Activated CD4-positive, alpha-beta T cell treated with anti-CD3 and anti-CD28 coated beads for 36 hours (primary cell): ENCODE measurements at regions of chr2 and their contacts with region 1.

Region 1: DNA sequence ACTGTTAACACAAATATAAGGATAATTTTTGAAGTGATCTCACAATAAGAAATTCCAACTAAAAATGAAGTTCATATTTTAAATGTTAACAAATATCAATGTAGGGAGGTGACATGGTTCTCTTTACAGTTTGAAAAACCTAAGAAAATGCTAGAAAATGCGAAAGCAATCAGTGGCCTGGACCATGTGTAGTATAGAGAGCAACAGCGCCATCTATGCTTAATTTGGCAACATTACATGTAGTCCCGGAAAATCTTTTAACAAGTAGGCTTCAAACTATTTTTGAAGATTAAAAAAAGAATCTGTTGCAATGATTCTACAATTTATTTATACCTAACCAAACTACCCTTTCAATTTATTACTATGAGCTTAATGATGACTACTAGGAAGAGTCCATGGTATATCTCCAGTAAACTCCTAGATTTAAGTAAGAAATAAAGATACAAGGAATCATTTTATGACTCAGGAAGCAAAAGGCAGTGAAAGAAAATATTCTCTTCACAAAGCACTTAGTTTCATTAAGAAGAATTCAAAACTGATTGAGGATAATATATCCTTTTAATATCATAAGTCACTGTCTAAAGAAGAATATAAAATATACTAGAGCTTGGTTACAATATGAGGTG is 33.3 kb downstream of the NDUFA10 start:
- DNase-seq: no peak
- ATAC-seq: peak; percentile 71
- H3K4me3 Mint-ChIP-seq: no peak overlapping the region
- H3K27ac Mint-ChIP-seq: no peak overlapping the region
- H3K4me1 Mint-ChIP-seq: no peaks in the 10 kb centered on the region
- H3K27me3 Mint-ChIP-seq: no peaks in the 10 kb centered on the region

Region 2: DNA sequence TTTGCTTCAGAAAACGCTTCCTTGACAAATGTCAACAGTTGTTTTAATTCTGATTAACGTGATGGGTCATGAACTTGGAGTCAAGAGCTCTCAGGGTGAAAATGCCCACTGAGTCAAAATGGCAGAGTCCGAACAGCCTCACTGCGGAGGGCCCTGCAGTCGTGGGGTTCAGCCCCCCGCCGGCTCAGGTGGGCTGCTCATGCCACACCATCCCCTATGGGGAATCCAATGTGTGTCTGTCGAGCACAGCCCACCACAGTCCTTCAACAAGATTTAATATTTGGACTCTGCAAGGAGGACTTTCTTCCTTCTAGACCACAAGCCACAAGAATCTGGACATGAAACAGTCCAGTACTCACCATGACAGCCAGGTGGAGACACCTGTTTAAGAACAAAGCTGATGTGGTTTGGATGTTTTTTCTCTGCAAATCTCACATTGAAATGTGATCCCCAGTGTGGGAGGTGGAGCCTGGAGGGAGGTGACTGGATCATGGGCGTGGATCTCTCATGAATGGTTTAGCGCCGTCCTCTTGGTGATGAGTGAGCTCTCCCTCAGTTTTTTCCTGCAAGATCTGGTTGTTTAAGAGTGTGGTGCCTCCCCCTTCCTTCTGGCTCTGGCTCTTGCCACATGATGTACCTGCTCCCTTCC is 167.6 kb before region 1 on chr2:
- CTCF ChIA-PET with region 1: no interaction called
- POLR2A ChIA-PET with region 1: no interaction called
- intact Hi-C with region 1: loop called in 1 of 2 experiments (anchors 5 kb)
- DNase-seq: no peak
- ATAC-seq: peak; percentile 28
- H3K4me3 Mint-ChIP-seq: no peak overlapping the region
- H3K27ac Mint-ChIP-seq: no peak overlapping the region
- H3K4me1 Mint-ChIP-seq: peaks cover 5% of the 10 kb centered on the region
- H3K27me3 Mint-ChIP-seq: no peaks in the 10 kb centered on the region

Region 3: DNA sequence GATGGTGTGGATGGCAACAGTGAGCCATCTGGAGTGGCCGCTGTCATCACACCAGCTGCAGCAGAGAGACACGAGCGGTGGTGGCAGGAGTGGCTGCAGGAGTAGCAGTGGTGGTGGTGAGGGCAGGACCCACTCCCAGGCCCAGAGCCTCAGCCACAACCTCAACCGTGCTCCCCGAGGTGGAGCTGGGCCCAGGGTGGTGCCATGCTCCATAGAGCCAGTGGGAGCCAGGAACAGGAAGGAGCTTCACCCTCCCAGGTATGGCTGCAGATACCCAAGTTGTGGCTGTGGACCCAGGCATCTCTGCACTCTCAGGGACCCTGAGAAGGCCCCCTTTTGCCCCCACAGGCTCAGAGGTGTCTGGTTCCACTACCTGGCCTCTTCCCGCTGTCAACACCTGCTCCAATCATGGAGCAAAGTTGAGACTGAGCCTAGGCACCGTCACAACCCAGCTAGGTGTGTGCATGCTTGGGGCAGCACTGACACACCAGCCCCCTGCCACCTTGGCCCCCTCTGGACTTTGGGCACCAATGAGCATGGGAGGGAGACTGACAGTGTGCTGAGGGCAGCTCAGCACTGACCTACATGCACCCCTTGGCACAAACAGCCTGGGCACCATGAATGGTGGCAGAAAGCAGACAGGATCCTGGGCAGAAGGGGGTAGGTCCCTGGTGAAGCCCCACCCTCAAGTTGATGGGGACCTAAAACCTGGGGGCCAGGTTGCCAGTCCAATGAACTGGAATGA is 155.6 kb before region 1 on chr2:
- CTCF ChIA-PET with region 1: no interaction called
- POLR2A ChIA-PET with region 1: no interaction called
- intact Hi-C with region 1: no loop called
- DNase-seq: no peak
- ATAC-seq: no peak
- H3K4me3 Mint-ChIP-seq: no peak overlapping the region
- H3K27ac Mint-ChIP-seq: no peak overlapping the region
- H3K4me1 Mint-ChIP-seq: no peaks in the 10 kb centered on the region
- H3K27me3 Mint-ChIP-seq: no peaks in the 10 kb centered on the region

Region 4: DNA sequence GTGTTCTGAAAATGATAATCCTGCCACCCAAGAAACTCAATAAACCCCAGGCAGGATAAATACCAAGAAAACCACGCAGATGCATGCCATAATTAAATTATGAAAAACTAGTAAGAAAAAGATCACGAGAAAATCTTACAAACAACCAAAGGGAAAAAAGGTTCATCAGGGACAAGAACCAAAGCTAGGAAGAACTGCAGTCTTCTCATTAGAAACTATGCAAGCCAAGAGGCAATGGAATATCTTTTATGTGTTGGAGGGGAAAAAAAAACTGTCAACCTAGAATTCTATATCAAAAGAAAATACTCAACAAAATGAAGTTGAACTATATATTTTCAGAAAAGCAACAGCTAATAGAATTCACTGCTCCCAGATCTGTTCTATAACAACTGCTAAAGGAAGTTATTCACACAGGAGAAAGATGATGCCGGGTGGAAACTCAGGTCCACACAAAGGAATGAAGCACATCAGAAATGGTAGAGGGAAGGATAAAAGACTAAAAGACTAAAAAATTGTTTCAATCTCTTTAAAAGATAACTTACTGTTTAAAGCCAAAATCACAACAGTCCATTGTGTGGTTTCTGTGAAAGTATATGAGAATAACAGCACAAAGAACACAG is 21.7 kb before region 1 on chr2:
- CTCF ChIA-PET with region 1: interaction called, 24 read pairs
- POLR2A ChIA-PET with region 1: no interaction called
- intact Hi-C with region 1: no loop called
- DNase-seq: no peak
- ATAC-seq: no peak
- H3K4me3 Mint-ChIP-seq: no peak overlapping the region
- H3K27ac Mint-ChIP-seq: no peak overlapping the region
- H3K4me1 Mint-ChIP-seq: no peaks in the 10 kb centered on the region
- H3K27me3 Mint-ChIP-seq: no peaks in the 10 kb centered on the region

Region 5: DNA sequence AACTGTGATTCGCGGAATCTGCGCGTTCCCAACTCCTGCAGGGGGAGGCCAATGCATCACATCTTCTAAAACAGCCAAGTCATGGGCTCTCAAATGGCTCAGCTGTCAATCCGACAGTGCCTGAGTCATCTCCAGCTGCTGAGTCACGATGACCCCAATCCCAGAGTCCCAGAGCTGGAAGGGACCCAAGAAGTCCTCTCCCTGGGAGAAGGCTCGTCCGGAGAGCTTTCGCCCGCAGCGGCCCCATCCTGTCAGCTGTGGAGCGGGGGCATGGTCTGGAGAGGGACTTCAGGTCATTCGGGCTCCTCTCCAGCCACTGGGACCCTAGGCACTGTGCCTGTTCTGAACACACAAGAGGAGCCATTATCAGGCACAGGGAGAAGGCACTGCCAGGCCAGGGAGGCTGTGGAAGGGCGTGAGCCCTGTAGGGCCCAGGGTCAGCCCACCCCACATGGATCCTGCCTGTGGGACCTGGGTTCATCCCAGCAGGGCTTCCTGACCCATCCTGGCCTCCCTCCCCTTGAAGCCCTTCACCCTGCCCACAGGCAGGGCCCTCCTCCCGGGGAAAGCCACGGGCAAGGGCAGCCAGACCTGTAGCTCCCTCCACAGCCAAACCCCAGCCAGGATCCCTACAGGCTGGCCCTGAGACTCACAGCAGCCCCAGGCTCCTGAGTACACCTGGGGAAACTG is 396.0 kb after region 1 on chr2:
- CTCF ChIA-PET with region 1: no interaction called
- POLR2A ChIA-PET with region 1: no interaction called
- intact Hi-C with region 1: no loop called
- DNase-seq: no peak
- ATAC-seq: no peak
- H3K4me3 Mint-ChIP-seq: no peak overlapping the region
- H3K27ac Mint-ChIP-seq: no peak overlapping the region
- H3K4me1 Mint-ChIP-seq: peaks cover 9% of the 10 kb centered on the region
- H3K27me3 Mint-ChIP-seq: peaks cover 4% of the 10 kb centered on the region